ENCODE measurements at regions of chr1 and their contacts with region 1.

Region 1: DNA sequence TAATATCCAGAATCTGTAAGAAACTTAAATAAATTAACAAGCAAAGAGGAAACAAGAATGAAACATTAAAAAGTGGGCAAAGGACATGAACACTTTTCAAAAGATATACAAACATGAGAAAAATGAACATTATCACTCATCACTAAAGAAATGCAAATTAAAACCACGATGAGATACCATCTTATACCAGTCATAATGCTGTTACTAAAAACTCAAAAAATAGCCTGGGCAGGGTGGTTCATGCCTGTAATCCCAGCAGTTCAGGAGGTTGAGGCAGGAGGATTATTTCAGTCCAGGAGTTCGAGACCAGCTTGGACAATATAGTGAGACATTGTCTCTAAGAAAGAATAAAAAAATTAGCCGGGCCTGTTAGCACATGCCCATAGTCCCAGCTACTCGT is 6.1 kb downstream of the ZNF124 start:
- DNase-seq: no peak
- ATAC-seq: no peak
- H3K4me3 ChIP-seq: no peak overlapping the region
- H3K4me3 Mint-ChIP-seq: no peak overlapping the region
- H3K27ac ChIP-seq: no peak overlapping the region
- H3K27ac Mint-ChIP-seq: no peak overlapping the region
- H3K4me1 ChIP-seq: no peaks in the 10 kb centered on the region
- H3K4me1 Mint-ChIP-seq: peaks cover 23 to 50% of the 10 kb centered on the region in 2 donors
- H3K27me3 ChIP-seq: no peaks in the 10 kb centered on the region
- H3K27me3 Mint-ChIP-seq: no peaks in the 10 kb centered on the region
- CTCF ChIP-seq: no peak

Region 2: GRCh38 chr1:247043406-247043805 is 122.3 kb before region 1 on chr1:
- intact Hi-C with region 1: loop called (anchors 10 kb)
- DNase-seq: no peak
- ATAC-seq: no peak
- H3K4me3 ChIP-seq: no peak overlapping the region
- H3K4me3 Mint-ChIP-seq: no peak overlapping the region
- H3K27ac ChIP-seq: no peak overlapping the region
- H3K27ac Mint-ChIP-seq: no peak overlapping the region
- H3K4me1 ChIP-seq: no peaks in the 10 kb centered on the region
- H3K4me1 Mint-ChIP-seq: peaks cover 0 to 3% of the 10 kb centered on the region in 2 donors
- H3K27me3 ChIP-seq: no peaks in the 10 kb centered on the region
- H3K27me3 Mint-ChIP-seq: no peaks in the 10 kb centered on the region
- CTCF ChIP-seq: no peak

Measured in natural killer cell (primary cell).